Testis (tissue), 5 donors: ENCODE measurements at regions of chrX and their contacts with region 1.

Region 1: DNA sequence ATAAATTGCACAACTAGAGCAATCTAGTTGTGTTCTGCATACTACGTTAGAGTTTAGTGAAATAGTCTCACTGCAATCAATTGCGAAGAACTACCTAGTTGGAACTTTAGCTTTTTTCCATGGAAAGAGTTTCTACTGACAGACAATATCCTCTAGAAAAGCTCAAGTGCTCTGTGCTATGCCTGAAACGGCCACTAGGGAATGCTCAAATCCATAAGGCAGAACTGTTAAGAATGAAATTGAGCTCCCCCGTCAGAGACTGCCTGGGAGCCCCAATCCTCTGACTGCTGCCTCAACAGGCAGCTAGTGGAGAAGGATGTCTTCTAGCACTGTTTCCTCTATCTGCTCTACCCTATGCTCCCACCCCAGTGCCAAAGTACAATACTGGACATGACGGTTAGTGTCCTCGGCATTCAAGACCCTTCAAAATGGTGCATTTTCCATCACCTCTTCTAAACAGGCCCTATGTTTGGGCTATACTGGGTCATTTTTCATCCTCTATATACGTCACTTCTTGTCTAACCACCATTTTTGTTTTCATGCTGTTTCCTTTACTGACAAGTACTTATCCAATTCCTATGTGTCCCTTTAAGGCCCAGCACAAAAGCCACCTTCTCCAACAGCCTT is 35.3 kb downstream of the FRMD7 start:
- DNase-seq: peak; percentile 76
- H3K4me3 ChIP-seq: no peak overlapping the region
- H3K27ac ChIP-seq: no peak overlapping the region
- H3K4me1 ChIP-seq: no peaks in the 10 kb centered on the region
- H3K27me3 ChIP-seq: no peaks in the 10 kb centered on the region
- CTCF ChIP-seq: peak; percentile 35 to 78 (median 64)
- POLR2A ChIP-seq: no peak

Region 2: DNA sequence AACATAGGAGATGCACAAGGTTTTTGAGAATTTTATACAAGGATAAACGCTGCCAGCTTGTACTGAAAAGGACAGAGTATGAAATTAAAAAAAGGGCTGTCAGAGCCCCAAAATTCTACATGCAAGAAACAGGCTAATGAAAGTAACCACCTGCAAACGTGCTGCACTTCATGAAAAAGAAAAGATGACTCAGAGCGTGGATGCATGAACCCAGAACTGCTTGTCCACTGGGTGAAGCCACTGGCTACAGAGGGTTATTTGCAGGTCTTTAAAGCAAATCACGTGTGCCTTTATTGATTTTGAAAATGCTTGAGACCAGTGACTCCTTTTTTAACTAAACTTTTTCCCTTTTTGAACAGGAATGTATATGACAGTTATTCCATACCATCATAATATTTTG is 60.6 kb after region 1 on chrX:
- intact Hi-C with region 1: no loop called
- DNase-seq: no peak
- H3K4me3 ChIP-seq: no peak overlapping the region
- H3K27ac ChIP-seq: no peak overlapping the region
- H3K4me1 ChIP-seq: no peaks in the 10 kb centered on the region
- H3K27me3 ChIP-seq: no peaks in the 10 kb centered on the region
- CTCF ChIP-seq: no peak
- POLR2A ChIP-seq: no peak

Region 3: DNA sequence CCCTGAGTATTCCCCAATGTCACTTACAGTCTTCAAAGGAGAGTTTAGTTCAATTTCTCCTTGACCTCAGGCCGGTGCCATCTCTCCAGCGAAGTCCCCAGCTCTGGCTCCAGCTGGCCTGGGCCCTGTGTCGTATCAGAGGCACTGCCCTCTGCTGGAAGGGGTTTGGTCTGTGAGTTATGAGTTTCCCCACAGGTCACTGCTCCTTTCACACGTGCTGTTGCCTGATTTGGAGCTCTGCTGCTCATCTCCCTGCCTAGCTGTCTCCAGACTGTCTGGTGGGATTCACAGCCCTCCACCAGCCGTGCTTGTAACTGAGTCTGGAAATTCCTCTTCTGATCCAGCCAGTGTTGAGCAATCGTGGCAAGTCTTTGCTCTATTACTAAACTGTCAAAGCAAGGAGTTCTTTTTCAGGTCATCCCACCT is 126.8 kb after region 1 on chrX and contains the start of gene RAP2C:
- intact Hi-C with region 1: loop called (anchors 10 kb)
- DNase-seq: peak; percentile 85
- H3K4me3 ChIP-seq: peak within 1 kb of the TSS; percentile 68 to 86
- H3K27ac ChIP-seq: peak within 1 kb of the TSS; percentile 84 to 91
- H3K4me1 ChIP-seq: no peaks in the 10 kb centered on the region
- H3K27me3 ChIP-seq: no peaks in the 10 kb centered on the region
- CTCF ChIP-seq: peak in 2 of 3 experiments; percentile 26
- POLR2A ChIP-seq: no peak
- total RNA-seq, gene RAP2C: 18.7 to 19.4 TPM